Transverse colon (tissue), 4 donors: ENCODE measurements at regions of chr2 and their contacts with region 1.

Region 1: GRCh38 chr2:39913648-39914461 is 134.8 kb upstream of the THUMPD2 start:
- DNase-seq: no peak
- H3K4me3 ChIP-seq: no peak overlapping the region
- H3K27ac ChIP-seq: peak overlapping the region in 1 of 4 donors; percentile 20
- H3K4me1 ChIP-seq: no peaks in the 10 kb centered on the region
- H3K27me3 ChIP-seq: peaks cover 5% of the 10 kb centered on the region
- CTCF ChIP-seq: peak; percentile 68 to 80 (median 75)
- EP300 ChIP-seq: no peak
- POLR2A ChIP-seq: no peak

Region 2: GRCh38 chr2:38750891-38751595 is 1162.8 kb before region 1 on chr2 and contains the start of gene SRSF7:
- in situ Hi-C with region 1: no loop called
- intact Hi-C with region 1: no loop called
- DNase-seq: peak; percentile 97
- H3K4me3 ChIP-seq: peak within 1 kb of the TSS; percentile 75 to 90 (median 78)
- H3K27ac ChIP-seq: peak within 1 kb of the TSS; percentile 97 to 99 (median 98)
- H3K4me1 ChIP-seq: peaks cover 22 to 45% (median 36%) of the 10 kb centered on the region in 4 donors
- H3K27me3 ChIP-seq: no peaks in the 10 kb centered on the region
- CTCF ChIP-seq: peak in 3 of 5 experiments; percentile 15 to 22 (median 17)
- EP300 ChIP-seq: peak; percentile 43
- POLR2A ChIP-seq: peak; percentile 100
- total RNA-seq, gene SRSF7: 75.6 to 153 (median 95.0) TPM

Region 3: GRCh38 chr2:39786761-39787518 is 126.9 kb before region 1 on chr2:
- in situ Hi-C with region 1: no loop called
- intact Hi-C with region 1: no loop called
- DNase-seq: no peak
- H3K4me3 ChIP-seq: no peak overlapping the region
- H3K27ac ChIP-seq: no peak overlapping the region
- H3K4me1 ChIP-seq: no peaks in the 10 kb centered on the region
- H3K27me3 ChIP-seq: no peaks in the 10 kb centered on the region
- CTCF ChIP-seq: no peak
- EP300 ChIP-seq: no peak
- POLR2A ChIP-seq: no peak

Region 4: DNA sequence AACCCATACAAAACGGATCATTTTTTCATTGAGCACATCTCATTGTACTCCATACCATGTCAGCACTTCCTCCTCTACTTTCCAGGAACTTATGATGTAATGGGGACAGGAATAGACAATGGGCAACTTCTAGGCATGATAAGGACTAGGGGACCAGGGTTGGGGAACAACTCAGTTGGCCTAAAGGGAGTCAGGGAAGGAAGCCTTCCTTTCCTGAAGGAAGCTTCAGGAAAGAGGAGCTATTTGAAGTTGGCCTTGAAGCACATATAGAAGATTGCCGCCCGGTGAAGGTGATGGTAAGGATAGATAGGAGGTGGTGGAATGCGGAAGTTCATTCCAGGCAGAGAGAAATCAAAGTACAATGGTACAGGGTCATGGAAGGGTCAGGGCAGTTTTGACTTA is 254.2 kb after region 1 on chr2:
- in situ Hi-C with region 1: no loop called
- intact Hi-C with region 1: no loop called
- DNase-seq: peak; percentile 31
- H3K4me3 ChIP-seq: no peak overlapping the region
- H3K27ac ChIP-seq: peak overlapping the region in 1 of 4 donors; percentile 12
- H3K4me1 ChIP-seq: peaks cover 0 to 23% (median 5%) of the 10 kb centered on the region in 4 donors
- H3K27me3 ChIP-seq: no peaks in the 10 kb centered on the region
- CTCF ChIP-seq: no peak
- EP300 ChIP-seq: no peak
- POLR2A ChIP-seq: no peak

Region 5: GRCh38 chr2:40554668-40555285 is 640.9 kb after region 1 on chr2:
- in situ Hi-C with region 1: loop called (anchors 10 to 25 kb)
- intact Hi-C with region 1: no loop called
- DNase-seq: peak; percentile 64
- H3K4me3 ChIP-seq: no peak overlapping the region
- H3K27ac ChIP-seq: no peak overlapping the region
- H3K4me1 ChIP-seq: no peaks in the 10 kb centered on the region
- H3K27me3 ChIP-seq: no peaks in the 10 kb centered on the region
- CTCF ChIP-seq: peak; percentile 70 to 80 (median 74)
- EP300 ChIP-seq: no peak
- POLR2A ChIP-seq: no peak

Region 6: GRCh38 chr2:40760071-40760666 is 846.3 kb after region 1 on chr2:
- in situ Hi-C with region 1: loop called in 1 of 4 experiments (anchors 25 kb)
- intact Hi-C with region 1: no loop called
- DNase-seq: peak; percentile 7
- H3K4me3 ChIP-seq: no peak overlapping the region
- H3K27ac ChIP-seq: peak overlapping the region in 1 of 4 donors; percentile 62
- H3K4me1 ChIP-seq: peaks cover 0 to 8% (median 0%) of the 10 kb centered on the region in 4 donors
- H3K27me3 ChIP-seq: no peaks in the 10 kb centered on the region
- CTCF ChIP-seq: peak; percentile 42 to 71 (median 55)
- EP300 ChIP-seq: no peak
- POLR2A ChIP-seq: no peak

Region 7: DNA sequence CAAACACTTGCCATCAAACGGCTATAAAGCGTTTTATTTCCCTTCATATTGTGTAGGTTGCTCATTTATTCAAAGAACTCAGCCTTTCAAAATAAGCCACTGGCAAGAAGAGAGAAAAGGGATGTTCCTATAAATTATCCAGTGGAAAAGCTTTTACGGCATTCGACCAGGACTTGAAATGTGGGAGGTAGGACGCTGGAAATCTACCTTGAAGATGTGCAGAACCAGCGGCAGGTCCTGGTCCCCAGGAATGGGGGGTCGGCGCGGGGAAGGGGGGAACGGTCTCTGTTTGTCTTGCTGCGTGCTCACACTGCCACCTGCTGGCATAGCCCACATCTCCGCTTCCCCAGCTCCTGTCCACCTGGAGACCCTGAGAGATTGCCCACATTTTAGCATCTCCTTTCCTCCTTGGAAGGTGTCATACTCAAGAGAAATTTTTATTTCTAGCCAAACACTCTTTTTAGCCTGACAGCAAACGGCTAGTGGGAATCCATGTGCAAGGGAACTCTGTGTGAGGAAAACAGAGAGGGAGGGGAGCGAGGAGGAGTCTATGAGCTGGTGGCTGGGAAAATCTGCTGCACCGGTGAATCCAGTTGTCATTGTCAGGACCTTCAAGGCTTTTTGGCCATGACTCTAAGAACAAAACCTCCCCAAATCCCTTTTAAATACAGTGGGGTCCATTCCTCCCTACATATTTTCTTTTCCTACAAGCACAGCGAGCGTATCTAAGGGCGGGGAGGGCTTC is 1785.0 kb after region 1 on chr2:
- in situ Hi-C with region 1: no loop called
- intact Hi-C with region 1: loop called (anchors 10 kb)
- DNase-seq: peak; percentile 15
- H3K4me3 ChIP-seq: no peak overlapping the region
- H3K27ac ChIP-seq: no peak overlapping the region
- H3K4me1 ChIP-seq: peaks cover 0 to 7% (median 0%) of the 10 kb centered on the region in 4 donors
- H3K27me3 ChIP-seq: no peaks in the 10 kb centered on the region
- CTCF ChIP-seq: peak; percentile 39 to 68 (median 56)
- EP300 ChIP-seq: no peak
- POLR2A ChIP-seq: no peak

Region 8: DNA sequence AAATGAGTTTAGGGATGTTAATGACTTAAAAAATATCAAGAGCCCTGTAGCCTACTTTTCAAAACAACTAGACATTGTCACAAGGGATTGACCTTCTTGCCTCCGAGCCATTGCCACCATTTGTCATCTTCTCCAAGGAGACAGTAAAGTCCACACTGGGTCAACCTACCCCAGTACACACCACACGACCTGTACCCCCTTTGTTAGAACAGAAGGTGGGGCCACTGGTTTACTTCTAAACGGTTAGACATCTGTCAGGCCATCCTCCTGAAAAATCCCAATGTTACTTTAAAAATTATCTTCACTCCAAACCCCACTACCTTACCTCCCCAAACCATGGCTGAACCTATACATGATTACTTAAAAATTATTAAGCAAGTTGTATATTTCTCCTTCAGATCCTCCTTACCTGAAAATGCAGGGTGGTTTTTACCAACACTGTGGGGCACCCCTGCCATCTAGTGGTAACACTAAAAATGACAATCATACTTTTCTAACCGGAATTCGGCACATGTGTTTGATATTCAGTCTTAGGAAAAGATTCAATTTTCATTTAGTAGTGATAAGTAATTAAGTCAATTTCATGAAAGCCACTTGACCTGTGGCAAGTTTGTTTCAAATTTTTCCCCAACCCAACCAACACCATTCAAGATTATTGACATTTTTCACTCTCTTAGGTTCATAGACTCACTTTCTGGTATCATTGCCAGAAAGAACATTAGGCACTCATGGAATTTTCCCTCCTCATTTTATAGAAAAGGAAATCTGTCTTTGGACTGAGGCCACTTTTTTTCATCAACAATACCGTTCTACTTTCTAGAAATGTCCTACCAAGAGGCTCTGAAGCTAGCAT is 1868.7 kb after region 1 on chr2:
- in situ Hi-C with region 1: loop called in 2 of 4 experiments (anchors 25 kb)
- intact Hi-C with region 1: no loop called
- DNase-seq: peak; percentile 10
- H3K4me3 ChIP-seq: no peak overlapping the region
- H3K27ac ChIP-seq: no peak overlapping the region
- H3K4me1 ChIP-seq: no peaks in the 10 kb centered on the region
- H3K27me3 ChIP-seq: no peaks in the 10 kb centered on the region
- CTCF ChIP-seq: peak; percentile 72 to 82 (median 79)
- EP300 ChIP-seq: no peak
- POLR2A ChIP-seq: no peak